GM13976 (cell line): ENCODE measurements at regions of chr19 and their contacts with region 1.

Region 1: GRCh38 chr19:50794439-50795237 is 4.4 kb downstream of the ACP4 start:
- DNase-seq: peak; percentile 82
- CTCF ChIP-seq: peak; percentile 17

Region 2: DNA sequence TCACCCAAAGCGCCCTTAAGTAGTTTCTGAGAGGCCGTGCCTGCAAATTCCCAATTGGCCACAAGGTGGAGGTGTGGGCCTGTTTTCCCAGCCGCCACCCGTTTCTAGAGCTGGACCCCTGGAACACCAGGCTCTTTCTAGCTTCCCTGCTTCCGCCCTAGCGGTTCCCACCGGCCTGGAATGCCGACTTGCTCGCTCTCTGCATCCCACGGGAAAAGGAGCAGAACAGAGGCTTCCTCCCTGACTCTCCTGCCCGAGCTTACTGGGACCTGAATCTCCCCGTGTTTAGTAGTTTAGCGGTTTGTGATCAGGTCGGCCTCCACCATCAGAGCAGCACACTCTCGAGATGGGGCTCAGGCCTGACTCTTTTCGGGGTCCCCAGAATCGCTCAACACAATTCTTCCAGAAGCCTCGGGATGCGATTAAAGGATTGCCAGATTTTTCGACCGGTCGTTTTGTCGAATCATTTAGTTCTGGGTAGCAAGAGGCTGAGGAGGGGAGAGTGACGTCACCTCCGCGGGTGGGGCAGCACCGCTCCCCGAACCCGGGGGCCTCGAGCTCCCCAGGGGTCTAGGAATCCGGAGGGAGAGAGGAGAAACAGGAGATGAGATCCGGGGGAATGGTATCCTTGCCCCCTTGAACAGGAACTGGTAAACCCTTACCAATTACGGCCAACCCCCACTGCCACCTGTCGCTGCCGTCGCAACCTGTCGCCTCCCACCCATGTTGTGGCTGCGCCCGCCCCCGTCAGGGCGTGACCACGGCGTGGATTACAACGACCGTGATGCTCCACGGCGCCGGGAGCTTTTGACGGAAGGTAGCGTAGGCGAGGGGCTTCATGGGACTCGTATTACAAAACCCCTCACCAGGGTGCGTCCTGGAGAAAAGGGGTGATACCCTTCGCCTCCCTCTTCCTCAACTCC is 437.2 kb before region 1 on chr19:
- in situ Hi-C with region 1: loop called (anchors 25 kb)
- DNase-seq: peak; percentile 74
- CTCF ChIP-seq: peak; percentile 78

Region 3: GRCh38 chr19:50537762-50538230 is 256.8 kb before region 1 on chr19:
- in situ Hi-C with region 1: loop called (anchors 25 kb)
- DNase-seq: peak; percentile 89
- CTCF ChIP-seq: peak; percentile 87

Region 4: DNA sequence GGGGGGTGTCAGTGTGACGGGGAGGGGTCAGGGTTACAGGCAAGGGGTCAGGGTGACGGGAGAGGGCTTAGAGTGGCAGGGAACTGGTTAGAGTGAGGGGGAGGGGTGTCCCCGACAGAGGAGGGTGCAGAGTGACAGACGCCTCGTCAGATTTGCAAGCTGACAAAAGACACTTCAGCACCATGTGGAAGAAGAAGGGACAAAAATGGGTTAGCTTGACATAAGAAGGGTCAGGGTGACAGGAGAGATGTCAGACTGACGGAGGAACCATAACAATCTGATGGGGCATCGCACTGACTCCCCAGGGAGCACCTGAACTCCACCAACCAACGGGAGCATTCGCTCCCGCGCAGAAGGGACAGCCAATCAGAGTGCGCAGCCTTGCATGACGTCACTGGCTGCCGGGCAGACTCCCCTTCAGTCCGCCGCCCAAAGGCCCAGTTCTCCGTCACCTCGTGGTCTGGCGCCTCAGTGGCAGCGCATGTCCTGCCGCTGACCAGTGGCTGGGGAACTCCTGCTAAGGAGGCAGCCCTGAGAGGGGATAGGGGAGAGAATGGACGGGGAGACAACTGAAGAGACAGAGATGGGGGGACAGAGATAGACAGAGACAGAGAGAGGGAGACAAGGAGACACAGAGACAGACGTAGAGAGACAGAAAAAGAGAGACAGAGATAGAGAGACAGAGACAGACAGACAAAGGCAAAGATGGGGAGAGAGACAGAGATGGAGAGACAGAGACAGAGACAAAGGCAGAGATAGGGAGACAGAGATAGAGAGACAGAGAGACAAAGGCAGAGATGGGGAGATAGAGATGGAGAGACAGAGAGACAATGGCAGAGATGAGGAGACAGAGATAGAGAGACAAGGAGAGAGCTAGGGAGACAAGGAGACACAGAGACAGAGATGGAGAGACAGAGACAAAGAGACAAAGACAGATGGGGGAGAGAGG is 115.2 kb before region 1 on chr19:
- in situ Hi-C with region 1: no loop called
- DNase-seq: peak; percentile 98
- CTCF ChIP-seq: no peak

Region 5: GRCh38 chr19:50909240-50910070 is 114.8 kb after region 1 on chr19:
- in situ Hi-C with region 1: loop called (anchors 10 kb)
- DNase-seq: peak; percentile 94
- CTCF ChIP-seq: no peak